ENCODE measurements at regions of chr3 and their contacts with region 1.

Region 1: DNA sequence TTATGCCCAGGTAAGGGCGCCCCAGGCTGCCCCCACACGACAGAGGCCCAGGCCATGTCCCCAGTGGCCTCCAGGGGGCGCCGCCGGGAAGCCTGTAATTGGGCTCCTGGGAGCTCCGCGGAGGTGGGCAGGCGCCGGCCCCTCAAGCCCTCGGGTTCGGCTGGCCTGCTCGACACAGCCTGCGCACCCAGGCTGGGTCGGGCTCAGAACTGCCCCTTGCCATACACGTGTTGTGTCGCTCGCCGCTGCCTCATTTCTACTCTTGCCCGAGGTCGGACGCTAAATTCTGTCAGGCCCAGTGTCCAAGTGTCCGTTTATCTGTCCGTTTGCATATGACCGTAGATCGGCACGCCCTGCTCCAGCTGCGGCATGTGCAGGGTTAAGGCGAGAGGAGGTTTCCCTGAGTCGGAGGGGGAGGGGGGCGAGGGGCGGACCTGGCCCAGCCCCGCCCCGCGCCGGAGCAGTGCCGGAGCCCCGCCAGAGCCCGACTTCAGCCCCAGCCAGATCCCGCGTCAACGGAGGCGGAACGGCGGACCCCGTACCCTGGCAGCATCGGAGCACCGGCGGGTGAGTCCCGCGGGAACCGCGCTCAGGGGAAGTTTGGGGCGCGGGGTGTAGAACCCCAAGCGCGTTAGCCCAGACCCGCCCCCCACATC is at the start of gene KLHDC8B:
- DNase-seq: peak; percentile 88
- H3K4me3 Mint-ChIP-seq: peak within 1 kb of the TSS; percentile 82
- H3K27ac Mint-ChIP-seq: no peak within 1 kb of the TSS
- H3K4me1 Mint-ChIP-seq: peaks cover 13% of the 10 kb centered on the region
- H3K27me3 Mint-ChIP-seq: no peaks in the 10 kb centered on the region
- total RNA-seq, gene KLHDC8B: 1.8 to 2.9 TPM

Region 2: DNA sequence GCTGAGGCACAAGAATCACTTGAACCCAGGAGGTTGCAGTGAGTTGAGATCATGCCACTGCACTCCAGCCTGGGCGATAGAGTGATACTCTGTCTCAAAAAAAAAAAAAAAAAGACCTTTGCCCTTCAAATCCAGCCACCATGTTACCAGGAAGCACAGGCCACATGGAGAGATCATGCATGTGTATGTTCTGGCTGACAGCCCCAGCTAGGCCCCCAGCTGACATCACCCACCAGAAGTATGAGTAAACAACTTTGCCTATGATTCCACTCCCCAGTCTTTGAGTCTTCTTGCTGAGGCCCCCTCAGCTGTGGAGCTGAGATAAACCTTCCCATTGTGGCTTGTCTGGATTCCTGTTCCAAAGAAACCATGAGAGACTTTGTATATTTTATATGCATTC is 256.0 kb before region 1 on chr3:
- CTCF ChIA-PET with region 1: no interaction called
- POLR2A ChIA-PET with region 1: no interaction called
- intact Hi-C with region 1: no loop called
- DNase-seq: peak; percentile 55
- H3K4me3 Mint-ChIP-seq: no peak overlapping the region
- H3K27ac Mint-ChIP-seq: peak overlapping the region; percentile 79
- H3K4me1 Mint-ChIP-seq: peaks cover 25% of the 10 kb centered on the region
- H3K27me3 Mint-ChIP-seq: no peaks in the 10 kb centered on the region

Region 3: DNA sequence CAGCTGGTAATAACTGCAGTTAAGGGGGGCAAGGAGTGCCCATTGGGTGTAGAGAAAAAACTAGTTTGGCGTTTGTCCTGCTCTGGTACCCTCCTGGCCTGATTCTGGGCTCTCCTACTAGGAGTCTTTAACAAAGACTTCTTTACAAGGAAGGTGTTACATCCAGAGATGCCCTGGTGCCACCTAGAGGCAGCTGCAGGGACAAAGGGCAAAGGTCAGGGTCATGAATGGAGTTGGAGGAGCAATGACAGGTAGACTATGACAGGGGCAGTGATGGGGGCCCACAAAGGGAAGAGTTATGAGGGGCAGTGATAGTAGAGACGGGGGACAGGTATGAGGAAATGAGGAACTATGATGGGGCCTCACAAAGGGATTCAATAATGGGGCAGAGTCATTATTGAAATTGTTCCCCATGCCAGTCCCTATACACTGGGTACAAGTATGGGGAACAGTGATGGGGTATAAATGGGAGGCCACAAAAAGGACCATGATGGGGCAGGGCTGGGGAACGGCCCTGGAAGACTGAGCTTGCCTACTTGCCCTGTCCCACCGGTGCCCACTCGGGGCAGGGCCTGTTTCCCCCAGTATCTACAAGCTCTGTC is 13.0 kb before region 1 on chr3:
- CTCF ChIA-PET with region 1: interaction called, 16 read pairs
- POLR2A ChIA-PET with region 1: no interaction called
- intact Hi-C with region 1: no loop called
- DNase-seq: peak; percentile 78
- H3K4me3 Mint-ChIP-seq: no peak overlapping the region
- H3K27ac Mint-ChIP-seq: no peak overlapping the region
- H3K4me1 Mint-ChIP-seq: peaks cover 5% of the 10 kb centered on the region
- H3K27me3 Mint-ChIP-seq: no peaks in the 10 kb centered on the region

Region 4: GRCh38 chr3:49181351-49181750 is 10.1 kb after region 1 on chr3:
- CTCF ChIA-PET with region 1: interaction called, 16 read pairs
- POLR2A ChIA-PET with region 1: no interaction called
- intact Hi-C with region 1: no loop called
- DNase-seq: no peak
- H3K4me3 Mint-ChIP-seq: no peak overlapping the region
- H3K27ac Mint-ChIP-seq: no peak overlapping the region
- H3K4me1 Mint-ChIP-seq: no peaks in the 10 kb centered on the region
- H3K27me3 Mint-ChIP-seq: peaks cover 8% of the 10 kb centered on the region

Region 5: DNA sequence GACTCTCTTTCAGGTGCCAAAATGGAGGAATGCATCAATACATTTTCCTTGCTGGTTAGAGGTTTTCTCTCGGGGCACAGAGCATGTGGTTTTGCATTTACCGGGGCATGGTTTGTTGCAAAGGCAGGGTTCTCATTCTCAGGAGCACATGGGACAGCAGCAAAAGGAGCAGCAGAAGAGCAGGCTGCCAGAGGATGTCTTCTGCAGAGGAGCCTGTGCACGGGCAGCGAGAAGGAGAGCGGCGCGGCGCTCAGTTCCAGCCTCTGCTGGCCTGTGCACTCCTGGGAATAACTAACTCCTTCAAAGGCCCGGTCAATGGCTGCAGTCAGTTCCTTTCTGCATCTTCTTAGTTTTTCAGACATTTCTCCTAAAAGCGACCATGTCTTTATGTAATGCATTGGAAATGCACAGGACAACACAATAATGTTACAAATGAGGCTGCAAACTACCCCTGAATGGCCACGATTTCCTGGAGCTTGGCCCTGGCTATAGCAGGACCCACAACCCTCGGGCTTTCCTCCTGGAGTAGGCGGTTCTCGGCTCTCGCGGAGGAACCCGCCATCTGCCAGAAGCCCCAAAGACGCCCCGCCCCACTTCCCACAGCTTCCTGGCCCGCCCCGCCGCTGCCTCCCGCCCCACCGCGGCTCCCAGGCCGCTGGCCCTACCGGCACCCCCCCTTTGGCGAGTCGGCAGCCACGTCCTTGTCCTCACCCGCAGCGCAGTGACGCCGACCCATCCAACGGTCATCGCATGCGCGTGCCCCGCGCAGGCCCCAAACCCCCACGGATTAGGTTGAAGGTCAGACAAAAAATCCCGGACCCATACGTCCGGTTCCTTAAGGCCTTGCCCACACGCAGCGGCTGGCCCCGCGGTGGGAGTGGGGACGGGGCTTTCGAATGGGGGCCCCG is 105.5 kb after region 1 on chr3 and contains the start of gene C3orf62:
- CTCF ChIA-PET with region 1: interaction called, 4 read pairs
- POLR2A ChIA-PET with region 1: interaction called, 3 read pairs
- intact Hi-C with region 1: loop called (anchors 2 kb)
- DNase-seq: peak; percentile 90
- H3K4me3 Mint-ChIP-seq: peak within 1 kb of the TSS; percentile 80
- H3K27ac Mint-ChIP-seq: peak within 1 kb of the TSS; percentile 85
- H3K4me1 Mint-ChIP-seq: peaks cover 29% of the 10 kb centered on the region
- H3K27me3 Mint-ChIP-seq: no peaks in the 10 kb centered on the region
- total RNA-seq, gene C3orf62: 2.8 to 3.0 TPM